A549 (cell line): ENCODE measurements at regions of chr17 and their contacts with region 1.

Region 1: DNA sequence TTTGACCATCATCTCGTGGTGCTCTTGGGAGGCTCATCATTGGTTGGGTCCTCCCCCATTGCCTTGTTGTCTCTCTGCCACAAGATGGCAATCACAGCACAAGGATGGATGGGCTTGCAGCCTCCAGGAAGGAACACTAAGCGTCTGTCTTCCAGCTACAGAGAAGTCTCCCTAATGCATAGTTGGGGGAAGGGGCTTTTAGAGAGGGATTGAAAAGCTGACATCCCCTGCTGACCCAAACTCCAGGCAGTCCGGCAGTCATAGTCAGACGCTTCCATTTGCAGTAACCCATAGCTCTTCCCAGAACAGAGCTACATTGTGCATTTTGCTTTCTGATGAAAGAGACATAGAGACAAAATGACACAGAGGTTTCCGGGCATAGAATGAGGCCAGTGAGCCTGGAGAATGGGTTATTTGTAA is 111.4 kb downstream of the UTP18 start:
- DNase-seq: peak; percentile 86 to 88
- ATAC-seq: peak; percentile 96 to 98
- H3K4me3 ChIP-seq: no peak overlapping the region
- H3K27ac ChIP-seq: peak overlapping the region; percentile 37 to 59; a peak in 4 of 6 replicates
- H3K4me1 ChIP-seq: 0 out of 3 replicates have a peak, but pooled peaks cover 3% of the 10 kb centered on the region
- CTCF ChIP-seq: peak; percentile 94
- EP300 ChIP-seq: no peak
- POLR2A ChIP-seq: no peak
- RAD21 ChIP-seq: peak; percentile 98 to 100

Region 2: DNA sequence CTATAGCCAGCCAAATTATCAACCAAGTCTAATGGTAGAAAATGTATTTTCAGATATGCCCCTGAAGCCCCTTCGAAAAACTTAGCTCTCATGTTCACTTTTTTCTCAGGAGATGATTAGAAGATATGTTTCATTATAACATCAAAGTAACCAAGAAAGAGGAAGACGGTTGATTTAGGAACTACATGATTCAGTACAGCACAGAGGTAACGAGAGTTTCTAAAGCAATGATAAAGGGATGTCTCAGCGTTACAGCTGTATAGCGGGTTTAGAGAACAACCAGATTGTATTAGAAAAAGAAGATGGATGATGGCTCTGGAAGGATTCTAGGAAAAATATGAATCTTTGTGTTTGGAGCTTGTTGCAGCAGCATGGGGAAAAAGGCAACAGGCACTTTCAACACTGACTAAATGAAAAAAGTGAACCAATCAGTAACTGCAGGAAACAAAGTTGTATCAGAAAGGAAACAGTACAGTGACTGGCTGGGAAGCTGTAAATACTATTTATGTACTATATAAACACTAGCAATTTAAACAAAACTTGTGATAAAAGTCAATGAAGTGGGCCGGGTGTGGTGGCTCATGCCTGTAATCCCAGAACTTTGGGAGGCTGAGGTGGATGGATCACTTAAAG is 133.4 kb before region 1 on chr17:
- CTCF ChIA-PET with region 1: no interaction called
- POLR2A ChIA-PET with region 1: no interaction called
- DNase-seq: no peak
- ATAC-seq: no peak
- H3K4me3 ChIP-seq: no peak overlapping the region
- H3K27ac ChIP-seq: no peak overlapping the region
- H3K4me1 ChIP-seq: no peaks in the 10 kb centered on the region
- CTCF ChIP-seq: no peak
- EP300 ChIP-seq: no peak
- POLR2A ChIP-seq: no peak
- RAD21 ChIP-seq: no peak

Region 3: GRCh38 chr17:51397361-51398127 is 25.8 kb after region 1 on chr17:
- CTCF ChIA-PET with region 1: interaction called, 18 read pairs
- POLR2A ChIA-PET with region 1: no interaction called
- DNase-seq: peak; percentile 91 to 94
- ATAC-seq: peak; percentile 96
- H3K4me3 ChIP-seq: no peak overlapping the region
- H3K27ac ChIP-seq: peak overlapping the region; percentile 72 to 87
- H3K4me1 ChIP-seq: peaks cover 39% of the 10 kb centered on the region
- CTCF ChIP-seq: no peak
- EP300 ChIP-seq: peak; percentile 81 to 89; a peak in 4 of 5 replicates
- POLR2A ChIP-seq: no peak
- RAD21 ChIP-seq: peak in 1 of 2 experiments; percentile 14; a peak in 3 of 5 replicates

Region 4: GRCh38 chr17:51435641-51436091 is 63.9 kb after region 1 on chr17:
- CTCF ChIA-PET with region 1: interaction called, 12 read pairs
- POLR2A ChIA-PET with region 1: no interaction called
- DNase-seq: peak; percentile 90 to 91
- ATAC-seq: peak; percentile 96 to 99
- H3K4me3 ChIP-seq: no peak overlapping the region
- H3K27ac ChIP-seq: peak overlapping the region in 1 of 2 experiments; percentile 47; a peak in 3 of 6 replicates
- H3K4me1 ChIP-seq: peaks cover 23% of the 10 kb centered on the region
- CTCF ChIP-seq: peak; percentile 66
- EP300 ChIP-seq: no peak
- POLR2A ChIP-seq: no peak
- RAD21 ChIP-seq: peak; percentile 52 to 63

Region 5: GRCh38 chr17:51499897-51500296 is 128.2 kb after region 1 on chr17:
- CTCF ChIA-PET with region 1: interaction called, 14 read pairs
- POLR2A ChIA-PET with region 1: no interaction called
- DNase-seq: no peak
- ATAC-seq: no peak
- H3K4me3 ChIP-seq: no peak overlapping the region
- H3K27ac ChIP-seq: no peak overlapping the region
- H3K4me1 ChIP-seq: no peaks in the 10 kb centered on the region
- CTCF ChIP-seq: no peak
- EP300 ChIP-seq: no peak
- POLR2A ChIP-seq: no peak
- RAD21 ChIP-seq: no peak

Region 6: GRCh38 chr17:51533219-51533618 is 161.5 kb after region 1 on chr17:
- CTCF ChIA-PET with region 1: interaction called, 186 read pairs
- POLR2A ChIA-PET with region 1: no interaction called
- DNase-seq: no peak
- ATAC-seq: no peak
- H3K4me3 ChIP-seq: no peak overlapping the region
- H3K27ac ChIP-seq: no peak overlapping the region
- H3K4me1 ChIP-seq: peaks cover 4% of the 10 kb centered on the region; the same call in 2 of the 3 replicates
- CTCF ChIP-seq: no peak
- EP300 ChIP-seq: no peak
- POLR2A ChIP-seq: no peak
- RAD21 ChIP-seq: no peak

Region 7: GRCh38 chr17:51640108-51640622 is 268.4 kb after region 1 on chr17:
- CTCF ChIA-PET with region 1: interaction called, 25 read pairs
- POLR2A ChIA-PET with region 1: no interaction called
- DNase-seq: peak; percentile 84 to 85
- ATAC-seq: peak; percentile 87 to 91
- H3K4me3 ChIP-seq: no peak overlapping the region
- H3K27ac ChIP-seq: peak overlapping the region; percentile 41 to 56; a peak in 5 of 6 replicates
- H3K4me1 ChIP-seq: peaks cover 26% of the 10 kb centered on the region
- CTCF ChIP-seq: peak; percentile 55
- EP300 ChIP-seq: no peak
- POLR2A ChIP-seq: no peak
- RAD21 ChIP-seq: peak in 1 of 2 experiments; percentile 37; a peak in 3 of 5 replicates